GM12878 (cell line): ENCODE measurements at regions of chr13 and their contacts with region 1.

Region 1: GRCh38 chr13:27997904-27998522 is 9.5 kb upstream of the URAD start:
- DNase-seq: no peak
- ATAC-seq: peak; percentile 92
- H3K4me3 ChIP-seq: no peak overlapping the region
- H3K27ac ChIP-seq: no peak overlapping the region
- H3K4me1 ChIP-seq: no peaks in the 10 kb centered on the region
- H3K27me3 ChIP-seq: no peaks in the 10 kb centered on the region
- CTCF ChIP-seq: peak; percentile 49 to 60 (median 53); a peak in 5 of 6 replicates
- EP300 ChIP-seq: no peak
- POLR2A ChIP-seq: no peak
- RAD21 ChIP-seq: peak; percentile 51

Region 2: GRCh38 chr13:27985600-27985999 is 12.4 kb before region 1 on chr13:
- CTCF ChIA-PET with region 1: interaction called, 12 read pairs
- POLR2A ChIA-PET with region 1: interaction called, 5 read pairs
- RAD21 ChIA-PET with region 1: interaction called, 4 read pairs
- SMC1A ChIA-PET with region 1: interaction called, 15 read pairs
- in situ Hi-C with region 1: no loop called
- intact Hi-C with region 1: no loop called
- DNase-seq: no peak
- ATAC-seq: no peak
- H3K4me3 ChIP-seq: no peak overlapping the region
- H3K27ac ChIP-seq: no peak overlapping the region
- H3K4me1 ChIP-seq: no peaks in the 10 kb centered on the region
- H3K27me3 ChIP-seq: peaks cover 8 to 10% of the 10 kb centered on the region in 2 experiments; a peak in 3 of 4 replicates
- CTCF ChIP-seq: no peak
- EP300 ChIP-seq: no peak
- POLR2A ChIP-seq: no peak
- RAD21 ChIP-seq: no peak